ENCODE measurements at regions of chr19 and their contacts with region 1.

Region 1: GRCh38 chr19:1064661-1065605 is 2.0 kb upstream of the ARHGAP45 start:
- DNase-seq: peak; percentile 47 to 73 (median 62)
- H3K4me3 ChIP-seq: peak overlapping the region; percentile 26
- H3K4me3 Mint-ChIP-seq: peak overlapping the region; percentile 46 to 89 (median 66)
- H3K27ac ChIP-seq: no peak overlapping the region
- H3K27ac Mint-ChIP-seq: peak overlapping the region; percentile 36 to 96 (median 80)
- H3K4me1 ChIP-seq: peaks cover 35% of the 10 kb centered on the region
- H3K4me1 Mint-ChIP-seq: peaks cover 20 to 52% (median 35%) of the 10 kb centered on the region in 3 donors
- H3K27me3 ChIP-seq: no peaks in the 10 kb centered on the region
- H3K27me3 Mint-ChIP-seq: no peaks in the 10 kb centered on the region

Region 2: DNA sequence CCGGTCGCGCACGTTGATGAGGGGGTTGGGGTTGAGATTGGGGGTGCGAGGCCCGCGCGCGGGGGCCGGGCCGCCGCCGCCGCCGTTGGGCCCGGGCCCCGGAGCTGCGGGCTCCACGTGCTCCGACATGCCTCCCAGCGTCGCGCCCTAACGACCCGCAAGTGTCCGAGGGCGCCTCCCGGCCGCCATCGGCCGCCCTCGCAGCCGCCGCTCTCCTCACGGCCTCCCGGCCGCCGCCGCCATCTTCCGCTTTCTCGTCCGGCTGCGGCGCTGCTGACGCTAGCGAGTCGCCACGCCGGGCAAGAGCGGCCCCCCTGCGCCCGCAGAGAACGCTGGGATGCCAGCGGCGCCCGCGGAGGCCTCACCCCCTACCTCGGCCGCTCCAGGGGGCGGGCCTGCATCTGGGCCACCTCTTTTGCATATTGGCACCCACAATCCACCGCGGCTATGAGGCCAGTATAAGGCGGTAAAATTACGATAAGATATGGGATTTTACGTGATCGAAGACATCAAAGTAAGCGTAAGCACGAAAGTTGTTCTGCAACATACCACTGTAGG is 44.0 kb before region 1 on chr19 and contains the start of gene TMEM259:
- CTCF ChIA-PET with region 1: interaction called, 62 read pairs
- POLR2A ChIA-PET with region 1: interaction called, 57 read pairs
- DNase-seq: peak; percentile 96 to 99 (median 98)
- H3K4me3 ChIP-seq: peak within 1 kb of the TSS; percentile 71
- H3K4me3 Mint-ChIP-seq: peak within 1 kb of the TSS; percentile 76 to 95 (median 89)
- H3K27ac ChIP-seq: peak within 1 kb of the TSS; percentile 97
- H3K27ac Mint-ChIP-seq: peak within 1 kb of the TSS; percentile 98 to 100 (median 99)
- H3K4me1 ChIP-seq: peaks cover 59% of the 10 kb centered on the region
- H3K4me1 Mint-ChIP-seq: peaks cover 24 to 60% (median 44%) of the 10 kb centered on the region in 3 donors
- H3K27me3 ChIP-seq: no peaks in the 10 kb centered on the region
- H3K27me3 Mint-ChIP-seq: peaks cover 0 to 6% of the 10 kb centered on the region in 2 donors
- total RNA-seq, gene TMEM259: 151 to 157 TPM

Region 3: DNA sequence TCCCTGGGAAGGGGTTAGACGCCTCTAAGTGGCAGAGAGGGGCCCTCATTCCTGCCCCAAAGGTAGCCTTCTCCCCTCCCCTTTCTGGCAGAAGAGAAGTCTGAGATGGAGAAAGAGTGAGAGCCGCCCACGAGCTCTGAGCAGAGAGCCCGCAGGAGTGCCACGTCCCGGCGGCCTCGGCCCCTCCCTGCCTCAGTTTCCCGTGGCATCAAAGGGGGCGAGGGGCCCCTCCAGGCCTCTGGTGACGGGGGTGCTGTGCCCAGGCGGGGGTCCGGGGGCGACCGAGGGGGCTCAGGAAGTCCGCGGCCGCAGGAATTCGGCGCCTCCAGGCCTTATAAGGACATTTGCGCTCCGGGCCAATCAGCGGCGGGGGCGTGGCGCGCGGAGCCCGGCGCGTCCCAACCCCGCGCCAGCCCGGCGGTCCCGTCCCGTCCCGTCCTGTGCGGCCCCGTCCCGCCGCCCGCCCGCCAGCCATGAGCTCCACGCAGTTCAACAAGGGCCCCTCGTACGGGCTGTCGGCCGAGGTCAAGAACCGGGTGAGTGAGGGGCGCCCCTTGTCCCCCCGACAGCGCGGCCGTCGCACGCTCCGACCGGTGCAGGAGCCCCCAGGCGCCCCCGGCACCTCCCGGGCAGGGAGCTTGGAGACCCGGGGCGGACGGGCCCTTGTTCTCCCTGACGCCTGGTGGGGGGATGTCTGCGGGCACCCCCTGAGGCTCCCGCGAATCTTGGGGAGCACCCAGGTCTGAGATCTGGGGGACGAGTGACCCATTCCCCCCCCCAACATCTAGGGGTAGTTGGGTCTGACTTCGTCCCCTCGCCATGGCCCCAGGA is 38.5 kb before region 1 on chr19 and contains the start of gene CNN2:
- CTCF ChIA-PET with region 1: interaction called, 62 read pairs
- POLR2A ChIA-PET with region 1: interaction called, 57 read pairs
- DNase-seq: peak; percentile 58 to 71 (median 68)
- H3K4me3 ChIP-seq: peak within 1 kb of the TSS; percentile 92
- H3K4me3 Mint-ChIP-seq: peak within 1 kb of the TSS; percentile 95 to 99 (median 98)
- H3K27ac ChIP-seq: peak within 1 kb of the TSS; percentile 89
- H3K27ac Mint-ChIP-seq: peak within 1 kb of the TSS; percentile 82 to 99 (median 96)
- H3K4me1 ChIP-seq: peaks cover 38% of the 10 kb centered on the region
- H3K4me1 Mint-ChIP-seq: peaks cover 26 to 45% (median 32%) of the 10 kb centered on the region in 3 donors
- H3K27me3 ChIP-seq: no peaks in the 10 kb centered on the region
- H3K27me3 Mint-ChIP-seq: peaks cover 0 to 6% of the 10 kb centered on the region in 2 donors
- total RNA-seq, gene CNN2: 78.1 to 78.9 TPM

Region 4: GRCh38 chr19:1039646-1040475 is 25.1 kb before region 1 on chr19 and contains the start of gene ABCA7:
- CTCF ChIA-PET with region 1: interaction called, 15 read pairs
- POLR2A ChIA-PET with region 1: interaction called, 28 read pairs
- DNase-seq: peak; percentile 98 to 100 (median 99)
- H3K4me3 ChIP-seq: peak within 1 kb of the TSS; percentile 78
- H3K4me3 Mint-ChIP-seq: peak within 1 kb of the TSS; percentile 94 to 100 (median 99)
- H3K27ac ChIP-seq: peak within 1 kb of the TSS; percentile 72
- H3K27ac Mint-ChIP-seq: peak within 1 kb of the TSS; percentile 86 to 97 (median 92)
- H3K4me1 ChIP-seq: peaks cover 49% of the 10 kb centered on the region
- H3K4me1 Mint-ChIP-seq: peaks cover 41 to 61% (median 46%) of the 10 kb centered on the region in 3 donors
- H3K27me3 ChIP-seq: no peaks in the 10 kb centered on the region
- H3K27me3 Mint-ChIP-seq: peaks cover 0 to 1% of the 10 kb centered on the region in 2 donors
- total RNA-seq, gene ABCA7: 33.8 to 39.5 TPM

Region 5: GRCh38 chr19:1094975-1095701 is 30.2 kb after region 1 on chr19 and contains the start of gene POLR2E:
- CTCF ChIA-PET with region 1: interaction called, 264 read pairs
- POLR2A ChIA-PET with region 1: interaction called, 737 read pairs
- DNase-seq: peak; percentile 98 to 99 (median 98)
- H3K4me3 ChIP-seq: peak within 1 kb of the TSS; percentile 84
- H3K4me3 Mint-ChIP-seq: peak within 1 kb of the TSS; percentile 85 to 98 (median 89)
- H3K27ac ChIP-seq: peak within 1 kb of the TSS; percentile 59
- H3K27ac Mint-ChIP-seq: peak within 1 kb of the TSS; percentile 74 to 98 (median 90)
- H3K4me1 ChIP-seq: peaks cover 39% of the 10 kb centered on the region
- H3K4me1 Mint-ChIP-seq: peaks cover 34 to 56% (median 38%) of the 10 kb centered on the region in 3 donors
- H3K27me3 ChIP-seq: no peaks in the 10 kb centered on the region
- H3K27me3 Mint-ChIP-seq: peaks cover 0 to 2% of the 10 kb centered on the region in 2 donors
- total RNA-seq, gene POLR2E: 270 to 278 TPM

Region 6: DNA sequence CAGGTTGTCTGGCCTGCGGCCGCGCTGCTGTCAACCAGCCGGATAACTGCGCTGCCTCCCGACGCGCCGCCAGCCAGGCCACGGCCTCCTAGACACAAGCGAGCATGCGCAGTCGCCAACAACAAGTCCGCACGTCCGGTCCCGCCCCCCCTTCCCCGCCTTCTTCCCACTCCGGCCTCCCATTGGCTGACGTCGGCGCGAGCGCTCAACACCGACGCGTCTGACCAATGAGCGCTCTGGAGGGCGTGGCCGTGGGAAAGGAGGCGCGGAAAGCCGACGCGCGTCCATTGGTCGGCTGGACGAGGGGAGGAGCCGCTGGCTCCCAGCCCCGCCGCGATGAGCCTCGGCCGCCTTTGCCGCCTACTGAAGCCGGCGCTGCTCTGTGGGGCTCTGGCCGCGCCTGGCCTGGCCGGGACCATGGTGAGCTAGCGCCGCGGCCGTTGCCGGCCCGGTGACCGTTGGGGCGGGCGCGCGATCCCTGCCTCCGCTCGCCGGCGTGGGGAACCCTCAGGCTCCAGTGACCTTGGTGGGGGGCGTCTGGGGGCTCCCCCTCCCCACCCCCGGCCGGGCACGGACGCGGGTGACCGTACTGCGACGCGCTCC is 38.9 kb after region 1 on chr19 and contains the start of gene GPX4:
- CTCF ChIA-PET with region 1: interaction called, 4 read pairs
- POLR2A ChIA-PET with region 1: interaction called, 14 read pairs
- DNase-seq: peak; percentile 94 to 99 (median 98)
- H3K4me3 ChIP-seq: peak within 1 kb of the TSS; percentile 69
- H3K4me3 Mint-ChIP-seq: peak within 1 kb of the TSS; percentile 73 to 92 (median 78)
- H3K27ac ChIP-seq: peak within 1 kb of the TSS; percentile 85
- H3K27ac Mint-ChIP-seq: peak within 1 kb of the TSS; percentile 87 to 100 (median 94)
- H3K4me1 ChIP-seq: peaks cover 43% of the 10 kb centered on the region
- H3K4me1 Mint-ChIP-seq: peaks cover 24 to 43% (median 28%) of the 10 kb centered on the region in 3 donors
- H3K27me3 ChIP-seq: no peaks in the 10 kb centered on the region
- H3K27me3 Mint-ChIP-seq: no peaks in the 10 kb centered on the region
- total RNA-seq, gene GPX4: 222 TPM

Region 7: DNA sequence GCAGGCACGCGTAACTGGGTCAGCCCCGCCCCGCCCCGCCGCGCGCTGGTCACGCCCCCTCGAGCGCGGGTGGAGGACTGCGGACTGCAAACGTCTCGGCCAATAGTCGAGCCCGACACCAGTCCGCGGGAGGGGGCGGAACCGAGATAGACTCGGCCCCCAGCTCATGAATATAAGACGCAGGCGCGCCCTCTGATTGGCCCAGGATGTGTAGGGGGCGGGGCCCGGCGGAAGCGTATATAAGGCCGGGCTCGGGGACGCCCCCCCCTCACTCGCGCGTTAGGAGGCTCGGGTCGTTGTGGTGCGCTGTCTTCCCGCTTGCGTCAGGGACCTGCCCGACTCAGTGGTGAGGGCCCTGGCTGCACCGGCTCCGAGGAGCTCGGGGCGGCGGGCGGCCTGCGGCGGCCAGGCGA is 204.1 kb after region 1 on chr19 and contains the start of gene CIRBP:
- CTCF ChIA-PET with region 1: interaction called, 3 read pairs
- POLR2A ChIA-PET with region 1: interaction called, 24 read pairs
- DNase-seq: peak; percentile 98 to 100 (median 99)
- H3K4me3 ChIP-seq: peak within 1 kb of the TSS; percentile 99
- H3K4me3 Mint-ChIP-seq: peak within 1 kb of the TSS; percentile 86 to 92 (median 87)
- H3K27ac ChIP-seq: peak within 1 kb of the TSS; percentile 90
- H3K27ac Mint-ChIP-seq: peak within 1 kb of the TSS; percentile 90 to 98 (median 94)
- H3K4me1 ChIP-seq: peaks cover 75% of the 10 kb centered on the region
- H3K4me1 Mint-ChIP-seq: peaks cover 58 to 83% (median 58%) of the 10 kb centered on the region in 3 donors
- H3K27me3 ChIP-seq: no peaks in the 10 kb centered on the region
- H3K27me3 Mint-ChIP-seq: peaks cover 0 to 10% of the 10 kb centered on the region in 2 donors
- total RNA-seq, gene CIRBP: 253 to 258 TPM

Measured in CD8-positive, alpha-beta memory T cell (primary cell).